Heart left ventricle (tissue), 16 donors: ENCODE measurements at regions of chr13 and their contacts with region 1.

Region 1: GRCh38 chr13:94435604-94436226 is 43.8 kb downstream of the DCT start:
- DNase-seq: no peak
- ATAC-seq: peak in 3 of 4 donors; percentile 50 to 71 (median 67)
- H3K4me3 ChIP-seq: no peak overlapping the region
- H3K27ac ChIP-seq: no peak overlapping the region
- H3K4me1 ChIP-seq: peaks cover 0 to 8% (median 0%) of the 10 kb centered on the region in 12 donors
- H3K27me3 ChIP-seq: peaks cover 0 to 3% (median 0%) of the 10 kb centered on the region in 9 donors
- CTCF ChIP-seq: peak; percentile 44 to 69 (median 61)
- POLR2A ChIP-seq: no peak

Region 2: GRCh38 chr13:93915269-93915809 is 520.4 kb before region 1 on chr13:
- intact Hi-C with region 1: no loop called
- DNase-seq: no peak
- ATAC-seq: peak in 1 of 4 donors; percentile 71
- H3K4me3 ChIP-seq: no peak overlapping the region
- H3K27ac ChIP-seq: no peak overlapping the region
- H3K4me1 ChIP-seq: no peaks in the 10 kb centered on the region
- H3K27me3 ChIP-seq: no peaks in the 10 kb centered on the region
- CTCF ChIP-seq: no peak
- POLR2A ChIP-seq: no peak

Region 3: GRCh38 chr13:94620286-94620896 is 184.7 kb after region 1 on chr13:
- intact Hi-C with region 1: loop called (anchors 1 to 5 kb)
- DNase-seq: no peak
- ATAC-seq: no peak
- H3K4me3 ChIP-seq: no peak overlapping the region
- H3K27ac ChIP-seq: no peak overlapping the region
- H3K4me1 ChIP-seq: peaks cover 0 to 5% (median 0%) of the 10 kb centered on the region in 12 donors
- H3K27me3 ChIP-seq: no peaks in the 10 kb centered on the region
- CTCF ChIP-seq: peak in 11 of 12 donors; percentile 11 to 53 (median 41)
- POLR2A ChIP-seq: no peak